Activated CD4-positive, alpha-beta T cell treated with anti-CD3 and anti-CD28 coated beads for 36 hours (primary cell): ENCODE measurements at regions of chr10 and their contacts with region 1.

Region 1: GRCh38 chr10:24465891-24466818 is 257.2 kb downstream of the KIAA1217 start:
- DNase-seq: peak; percentile 80
- ATAC-seq: peak; percentile 79
- H3K4me3 Mint-ChIP-seq: no peak overlapping the region
- H3K27ac Mint-ChIP-seq: no peak overlapping the region
- H3K4me1 Mint-ChIP-seq: peaks cover 37% of the 10 kb centered on the region
- H3K27me3 Mint-ChIP-seq: peaks cover 18% of the 10 kb centered on the region

Region 2: GRCh38 chr10:23368816-23369640 is 1097.1 kb before region 1 on chr10:
- CTCF ChIA-PET with region 1: no interaction called
- POLR2A ChIA-PET with region 1: no interaction called
- intact Hi-C with region 1: loop called in 1 of 2 experiments (anchors 10 kb)
- DNase-seq: no peak
- ATAC-seq: peak; percentile 43
- H3K4me3 Mint-ChIP-seq: peak overlapping the region; percentile 3
- H3K27ac Mint-ChIP-seq: peak overlapping the region; percentile 58
- H3K4me1 Mint-ChIP-seq: peaks cover 59% of the 10 kb centered on the region
- H3K27me3 Mint-ChIP-seq: no peaks in the 10 kb centered on the region

Region 3: GRCh38 chr10:23399701-23400144 is 1066.4 kb before region 1 on chr10:
- CTCF ChIA-PET with region 1: no interaction called
- POLR2A ChIA-PET with region 1: no interaction called
- intact Hi-C with region 1: no loop called
- DNase-seq: no peak
- ATAC-seq: no peak
- H3K4me3 Mint-ChIP-seq: no peak overlapping the region
- H3K27ac Mint-ChIP-seq: no peak overlapping the region
- H3K4me1 Mint-ChIP-seq: no peaks in the 10 kb centered on the region
- H3K27me3 Mint-ChIP-seq: no peaks in the 10 kb centered on the region

Region 4: DNA sequence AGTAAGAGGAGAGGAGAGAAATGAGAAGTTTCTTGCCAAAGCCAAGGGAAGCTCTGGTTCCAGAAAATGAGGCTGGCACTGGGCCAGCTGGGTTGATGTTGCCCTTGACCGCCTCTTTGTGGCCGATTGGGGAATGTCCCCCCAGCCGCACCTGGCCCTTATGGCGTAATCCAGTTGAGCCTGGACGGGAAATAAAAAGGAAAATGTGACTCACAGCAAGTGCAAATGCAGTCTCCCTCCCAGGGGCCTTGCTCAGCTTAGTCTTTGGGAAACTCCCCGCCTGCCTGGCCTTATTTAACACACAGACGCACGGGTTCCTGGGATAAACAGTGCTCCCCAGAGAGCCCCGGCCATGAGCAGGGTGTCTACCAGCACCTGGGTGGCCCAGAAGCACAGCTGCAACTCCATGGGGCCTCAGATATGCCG is 82.5 kb before region 1 on chr10:
- CTCF ChIA-PET with region 1: no interaction called
- POLR2A ChIA-PET with region 1: no interaction called
- intact Hi-C with region 1: loop called (anchors 1 to 5 kb)
- DNase-seq: peak; percentile 76
- ATAC-seq: peak; percentile 75
- H3K4me3 Mint-ChIP-seq: peak overlapping the region; percentile 10
- H3K27ac Mint-ChIP-seq: peak overlapping the region; percentile 65
- H3K4me1 Mint-ChIP-seq: peaks cover 18% of the 10 kb centered on the region
- H3K27me3 Mint-ChIP-seq: peaks cover 25% of the 10 kb centered on the region

Region 5: GRCh38 chr10:24449321-24449740 is 16.8 kb before region 1 on chr10:
- CTCF ChIA-PET with region 1: no interaction called
- POLR2A ChIA-PET with region 1: no interaction called
- intact Hi-C with region 1: loop called (anchors 1 kb)
- DNase-seq: no peak
- ATAC-seq: peak; percentile 65
- H3K4me3 Mint-ChIP-seq: no peak overlapping the region
- H3K27ac Mint-ChIP-seq: no peak overlapping the region
- H3K4me1 Mint-ChIP-seq: peaks cover 12% of the 10 kb centered on the region
- H3K27me3 Mint-ChIP-seq: peaks cover 27% of the 10 kb centered on the region